Aorta (tissue), 5 donors: ENCODE measurements at regions of chr14 and their contacts with region 1.

Region 1: GRCh38 chr14:23120541-23121251 is 1.6 kb upstream of the CEBPE start:
- DNase-seq: peak; percentile 94 to 95
- ATAC-seq: peak; percentile 94
- H3K4me3 ChIP-seq: no peak overlapping the region
- H3K27ac ChIP-seq: no peak overlapping the region
- H3K4me1 ChIP-seq: no peaks in the 10 kb centered on the region
- H3K27me3 ChIP-seq: no peaks in the 10 kb centered on the region

Region 2: DNA sequence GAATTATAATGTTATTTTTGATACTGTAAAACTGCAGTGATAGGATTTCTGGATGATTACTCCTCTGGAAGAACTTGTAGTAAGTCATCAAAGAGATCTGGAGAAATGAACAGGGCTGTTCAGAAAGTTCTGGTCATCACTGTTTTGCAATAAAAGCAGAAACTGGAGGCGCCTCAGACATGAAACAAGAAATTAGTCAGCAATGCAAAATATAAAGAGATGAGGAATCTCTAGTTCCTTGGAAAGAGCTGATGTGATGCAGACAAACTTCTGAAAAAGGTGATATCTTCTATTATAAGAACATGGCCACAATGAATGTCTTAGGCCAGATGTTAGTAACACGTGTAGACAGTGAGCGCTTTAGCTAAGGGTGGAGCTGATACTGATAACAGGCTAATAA is 35.2 kb before region 1 on chr14:
- intact Hi-C with region 1: no loop called
- DNase-seq: no peak
- ATAC-seq: no peak
- H3K4me3 ChIP-seq: no peak overlapping the region
- H3K27ac ChIP-seq: no peak overlapping the region
- H3K4me1 ChIP-seq: no peaks in the 10 kb centered on the region
- H3K27me3 ChIP-seq: no peaks in the 10 kb centered on the region

Region 3: GRCh38 chr14:23186913-23187654 is 66.4 kb after region 1 on chr14:
- intact Hi-C with region 1: loop called (anchors 1 kb)
- DNase-seq: no peak
- ATAC-seq: peak; percentile 80
- H3K4me3 ChIP-seq: no peak overlapping the region
- H3K27ac ChIP-seq: no peak overlapping the region
- H3K4me1 ChIP-seq: no peaks in the 10 kb centered on the region
- H3K27me3 ChIP-seq: no peaks in the 10 kb centered on the region

Region 4: GRCh38 chr14:23294734-23295561 is 174.3 kb after region 1 on chr14:
- intact Hi-C with region 1: loop called in 1 of 2 experiments (anchors 10 kb)
- DNase-seq: no peak
- ATAC-seq: peak; percentile 83
- H3K4me3 ChIP-seq: no peak overlapping the region
- H3K27ac ChIP-seq: no peak overlapping the region
- H3K4me1 ChIP-seq: peaks cover 0 to 2% of the 10 kb centered on the region in 2 donors
- H3K27me3 ChIP-seq: no peaks in the 10 kb centered on the region